SK-N-SH (cell line): ENCODE measurements at regions of chr2 and their contacts with region 1.

Region 1: DNA sequence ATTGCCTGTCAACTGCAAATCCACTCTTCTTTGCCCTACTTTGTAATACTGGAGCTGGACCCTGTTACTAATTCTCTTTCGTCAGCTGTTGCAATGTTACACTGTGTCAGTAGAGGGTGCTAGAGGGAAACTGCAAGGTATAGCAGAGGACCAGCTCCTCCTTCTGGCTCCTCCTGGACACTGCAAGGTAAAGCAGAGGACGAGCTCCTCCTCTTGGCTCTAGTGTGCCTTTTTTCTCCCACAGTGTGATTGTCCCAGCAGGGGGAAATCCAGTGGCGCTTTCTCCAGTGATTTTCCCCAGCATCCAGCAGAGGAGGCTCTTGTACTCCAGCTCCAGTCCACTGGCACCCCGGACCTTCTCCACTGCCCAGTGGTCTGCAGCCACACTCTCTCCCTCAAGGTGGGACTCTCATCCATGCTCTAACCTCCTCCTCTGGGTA is 95.6 kb downstream of the CAPN13 start:
- DNase-seq: peak; percentile 86
- H3K4me3 ChIP-seq: peak overlapping the region in 1 of 2 experiments; percentile 14; a peak in 1 of 4 replicates
- H3K27ac ChIP-seq: no peak overlapping the region
- H3K4me1 ChIP-seq: peaks cover 0 to 3% of the 10 kb centered on the region in 2 experiments; a peak in 1 of 4 replicates
- H3K27me3 ChIP-seq: no peaks in the 10 kb centered on the region
- CTCF ChIP-seq: peak; percentile 99
- EP300 ChIP-seq: no peak
- RAD21 ChIP-seq: peak; percentile 91

Region 2: GRCh38 chr2:30193104-30193681 is 518.5 kb before region 1 on chr2:
- CTCF ChIA-PET with region 1: interaction called, 21 read pairs
- POLR2A ChIA-PET with region 1: no interaction called
- DNase-seq: no peak
- H3K4me3 ChIP-seq: no peak overlapping the region
- H3K27ac ChIP-seq: no peak overlapping the region
- H3K4me1 ChIP-seq: peaks cover 0 to 6% of the 10 kb centered on the region in 2 experiments; a peak in 1 of 4 replicates
- H3K27me3 ChIP-seq: no peaks in the 10 kb centered on the region; the same call in 1 of the 2 replicates
- CTCF ChIP-seq: no peak
- EP300 ChIP-seq: no peak
- RAD21 ChIP-seq: no peak

Region 3: GRCh38 chr2:30245364-30245763 is 466.3 kb before region 1 on chr2:
- CTCF ChIA-PET with region 1: interaction called, 262 read pairs
- POLR2A ChIA-PET with region 1: no interaction called
- DNase-seq: no peak
- H3K4me3 ChIP-seq: no peak overlapping the region
- H3K27ac ChIP-seq: no peak overlapping the region
- H3K4me1 ChIP-seq: no peaks in the 10 kb centered on the region
- H3K27me3 ChIP-seq: no peaks in the 10 kb centered on the region
- CTCF ChIP-seq: no peak
- EP300 ChIP-seq: no peak
- RAD21 ChIP-seq: no peak

Region 4: GRCh38 chr2:30625276-30625675 is 86.4 kb before region 1 on chr2:
- CTCF ChIA-PET with region 1: no interaction called
- POLR2A ChIA-PET with region 1: no interaction called
- DNase-seq: no peak
- H3K4me3 ChIP-seq: no peak overlapping the region
- H3K27ac ChIP-seq: no peak overlapping the region
- H3K4me1 ChIP-seq: no peaks in the 10 kb centered on the region
- H3K27me3 ChIP-seq: no peaks in the 10 kb centered on the region
- CTCF ChIP-seq: no peak
- EP300 ChIP-seq: no peak
- RAD21 ChIP-seq: no peak

Region 5: GRCh38 chr2:30675758-30676157 is 35.9 kb before region 1 on chr2:
- CTCF ChIA-PET with region 1: no interaction called
- POLR2A ChIA-PET with region 1: no interaction called
- DNase-seq: no peak
- H3K4me3 ChIP-seq: no peak overlapping the region
- H3K27ac ChIP-seq: no peak overlapping the region
- H3K4me1 ChIP-seq: peaks cover 0 to 4% of the 10 kb centered on the region in 2 experiments; a peak in 1 of 4 replicates
- H3K27me3 ChIP-seq: no peaks in the 10 kb centered on the region
- CTCF ChIP-seq: no peak
- EP300 ChIP-seq: no peak
- RAD21 ChIP-seq: no peak

Region 6: DNA sequence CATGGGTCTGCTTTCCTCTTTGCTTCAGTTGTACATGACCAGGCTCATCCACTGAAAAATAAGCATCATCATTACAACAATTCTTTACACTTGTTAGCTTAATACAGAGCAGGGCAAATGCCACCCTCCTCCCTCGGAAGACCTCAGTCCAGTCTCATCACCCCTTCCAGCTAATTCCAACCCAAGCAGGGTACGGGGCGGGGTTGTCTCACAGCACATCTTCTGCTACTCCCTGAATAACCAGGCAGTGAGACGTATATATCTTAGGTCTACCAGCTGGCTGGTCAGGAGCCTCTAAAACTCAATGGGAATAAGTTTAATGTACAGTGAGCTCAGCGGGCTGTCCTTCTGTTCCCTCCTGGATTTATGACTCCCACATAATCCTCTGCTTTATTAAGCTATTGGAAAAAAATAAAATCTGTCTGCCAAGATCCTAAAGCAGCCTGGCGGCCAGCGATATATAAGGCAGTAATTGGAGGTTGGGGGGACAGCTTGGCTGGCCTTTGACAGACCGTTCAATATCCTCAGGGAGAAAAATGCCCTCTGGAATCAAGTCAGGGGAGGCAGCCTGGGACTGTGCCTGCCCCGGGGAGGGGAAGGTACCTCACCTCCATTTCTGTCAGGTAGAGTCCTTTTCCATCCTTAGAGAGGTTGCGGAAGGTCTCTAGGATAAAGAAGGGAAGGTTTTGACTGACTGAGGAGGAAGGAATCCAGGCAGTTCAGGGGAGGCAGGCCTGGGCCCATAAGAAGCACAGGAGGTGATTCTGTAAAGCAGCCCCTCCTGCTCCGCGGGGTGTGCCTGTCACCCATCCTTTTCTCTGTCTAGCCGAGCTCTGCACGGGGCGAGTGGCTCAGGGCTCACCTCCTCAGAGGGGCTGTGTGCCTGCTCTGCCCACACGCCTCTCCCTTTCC is 19.3 kb after region 1 on chr2:
- CTCF ChIA-PET with region 1: interaction called, 80 read pairs
- POLR2A ChIA-PET with region 1: no interaction called
- DNase-seq: no peak
- H3K4me3 ChIP-seq: no peak overlapping the region
- H3K27ac ChIP-seq: no peak overlapping the region
- H3K4me1 ChIP-seq: peaks cover 0 to 14% of the 10 kb centered on the region in 2 experiments; a peak in 2 of 4 replicates
- H3K27me3 ChIP-seq: peaks cover 10% of the 10 kb centered on the region
- CTCF ChIP-seq: no peak
- EP300 ChIP-seq: no peak
- RAD21 ChIP-seq: no peak

Region 7: DNA sequence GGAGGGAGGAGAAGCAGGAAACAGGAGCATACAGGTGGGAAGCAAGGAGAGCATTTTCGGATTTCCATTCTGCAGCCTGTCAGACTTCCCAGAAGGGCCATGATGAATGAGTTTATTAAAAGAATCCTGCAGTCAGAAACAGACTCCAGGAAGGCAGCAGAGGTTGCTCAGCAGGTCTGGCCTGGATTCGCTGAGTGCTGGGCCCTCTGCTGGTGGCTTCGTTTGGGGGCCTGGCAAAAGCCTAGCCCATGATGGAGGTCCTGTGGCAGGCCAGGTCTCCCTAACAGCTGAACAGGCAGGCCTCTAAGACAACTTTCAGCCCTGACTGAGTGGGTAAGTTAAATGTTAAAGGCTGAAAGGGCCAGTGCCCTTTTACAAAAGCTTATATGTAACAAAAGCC is 203.8 kb after region 1 on chr2:
- CTCF ChIA-PET with region 1: interaction called, 25 read pairs
- POLR2A ChIA-PET with region 1: no interaction called
- DNase-seq: peak; percentile 77
- H3K4me3 ChIP-seq: no peak overlapping the region
- H3K27ac ChIP-seq: peak overlapping the region in 1 of 2 experiments; percentile 71; a peak in 2 of 4 replicates
- H3K4me1 ChIP-seq: peaks cover 0 to 11% of the 10 kb centered on the region in 2 experiments; a peak in 1 of 4 replicates
- H3K27me3 ChIP-seq: no peaks in the 10 kb centered on the region
- CTCF ChIP-seq: peak; percentile 22; the same call in 1 of the 2 replicates
- EP300 ChIP-seq: 0 out of 4 replicates have a peak, but pooled peaks of 1 of the 2 experiments have one; percentile 21
- RAD21 ChIP-seq: peak; percentile 71

Region 8: GRCh38 chr2:31170071-31170698 is 458.5 kb after region 1 on chr2:
- CTCF ChIA-PET with region 1: interaction called, 535 read pairs
- POLR2A ChIA-PET with region 1: no interaction called
- DNase-seq: peak; percentile 87
- H3K4me3 ChIP-seq: no peak overlapping the region; a peak in 1 of 4 replicates
- H3K27ac ChIP-seq: no peak overlapping the region
- H3K4me1 ChIP-seq: peaks cover 0 to 11% of the 10 kb centered on the region in 2 experiments; a peak in 1 of 4 replicates
- H3K27me3 ChIP-seq: no peaks in the 10 kb centered on the region
- CTCF ChIP-seq: peak; percentile 97
- EP300 ChIP-seq: no peak
- RAD21 ChIP-seq: peak; percentile 100